AG04449 (cell line): ENCODE measurements at regions of chr12 and their contacts with region 1.

Region 1: GRCh38 chr12:10016881-10017280 is 6.5 kb downstream of the CLEC12B start:
- DNase-seq: no peak
- H3K4me3 ChIP-seq: no peak overlapping the region
- CTCF ChIP-seq: no peak

Region 2: DNA sequence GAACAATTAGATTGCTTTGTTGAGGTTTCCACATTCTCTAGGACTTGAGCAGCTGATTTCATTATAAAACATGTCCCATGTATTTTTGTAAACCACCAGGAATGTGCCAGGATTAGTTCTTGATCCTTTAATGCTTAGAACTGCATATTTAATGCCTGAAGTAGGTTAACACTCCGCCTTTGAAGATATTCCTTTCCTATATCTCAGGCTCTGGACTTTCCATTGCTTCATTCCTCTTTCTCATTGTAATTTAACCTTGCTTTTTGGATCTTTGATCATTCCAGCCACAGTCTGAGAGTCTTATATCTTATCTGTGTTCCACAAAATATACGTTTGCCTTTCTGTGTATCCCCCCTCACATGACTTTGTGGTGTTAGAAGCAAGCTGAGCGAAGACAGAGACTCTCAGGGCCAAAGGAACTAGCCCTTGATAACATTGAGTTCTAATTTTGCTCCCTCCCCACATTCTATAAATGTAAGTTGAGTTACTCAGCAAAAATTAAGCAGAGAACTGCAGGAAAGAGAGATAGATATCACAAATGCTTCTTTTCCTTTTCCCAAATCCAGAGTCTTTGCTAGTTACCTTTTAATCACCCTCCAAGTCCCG is 15.6 kb before region 1 on chr12:
- CTCF ChIA-PET with region 1: interaction called, 27 read pairs
- POLR2A ChIA-PET with region 1: no interaction called
- DNase-seq: no peak
- H3K4me3 ChIP-seq: no peak overlapping the region
- CTCF ChIP-seq: no peak

Region 3: GRCh38 chr12:10033783-10034545 is 17.1 kb after region 1 on chr12:
- CTCF ChIA-PET with region 1: no interaction called
- POLR2A ChIA-PET with region 1: no interaction called
- DNase-seq: no peak
- H3K4me3 ChIP-seq: no peak overlapping the region
- CTCF ChIP-seq: peak; percentile 26

Region 4: DNA sequence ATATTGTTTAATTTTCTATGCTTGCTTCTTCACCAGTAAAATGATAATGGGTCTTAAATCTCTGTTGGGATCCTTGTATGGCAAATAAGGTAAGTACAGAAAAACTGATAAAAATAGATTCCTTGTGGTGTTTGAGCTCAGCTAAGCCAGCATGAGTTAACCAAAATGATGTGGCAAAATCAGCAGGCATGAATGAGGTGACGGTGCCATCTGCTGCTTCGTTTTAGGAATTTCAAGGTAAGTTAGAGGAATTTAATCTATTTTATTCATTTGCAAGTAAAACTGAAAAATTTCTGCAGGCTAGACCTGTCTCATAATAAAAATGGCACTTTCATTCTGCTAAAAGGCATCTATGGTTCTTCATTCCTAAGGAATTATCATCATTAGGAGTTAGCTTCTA is 123.1 kb after region 1 on chr12:
- CTCF ChIA-PET with region 1: interaction called, 82 read pairs
- POLR2A ChIA-PET with region 1: no interaction called
- DNase-seq: no peak
- H3K4me3 ChIP-seq: no peak overlapping the region
- CTCF ChIP-seq: peak; percentile 39